Mucosa of descending colon (tissue), 3 donors: ENCODE measurements at regions of chr15 and their contacts with region 1.

Region 1: GRCh38 chr15:53490341-53490740 is 269.1 kb downstream of the WDR72 start:
- DNase-seq: no peak
- ATAC-seq: no peak
- H3K4me3 ChIP-seq: no peak overlapping the region
- H3K4me1 ChIP-seq: no peaks in the 10 kb centered on the region
- CTCF ChIP-seq: no peak

Region 2: DNA sequence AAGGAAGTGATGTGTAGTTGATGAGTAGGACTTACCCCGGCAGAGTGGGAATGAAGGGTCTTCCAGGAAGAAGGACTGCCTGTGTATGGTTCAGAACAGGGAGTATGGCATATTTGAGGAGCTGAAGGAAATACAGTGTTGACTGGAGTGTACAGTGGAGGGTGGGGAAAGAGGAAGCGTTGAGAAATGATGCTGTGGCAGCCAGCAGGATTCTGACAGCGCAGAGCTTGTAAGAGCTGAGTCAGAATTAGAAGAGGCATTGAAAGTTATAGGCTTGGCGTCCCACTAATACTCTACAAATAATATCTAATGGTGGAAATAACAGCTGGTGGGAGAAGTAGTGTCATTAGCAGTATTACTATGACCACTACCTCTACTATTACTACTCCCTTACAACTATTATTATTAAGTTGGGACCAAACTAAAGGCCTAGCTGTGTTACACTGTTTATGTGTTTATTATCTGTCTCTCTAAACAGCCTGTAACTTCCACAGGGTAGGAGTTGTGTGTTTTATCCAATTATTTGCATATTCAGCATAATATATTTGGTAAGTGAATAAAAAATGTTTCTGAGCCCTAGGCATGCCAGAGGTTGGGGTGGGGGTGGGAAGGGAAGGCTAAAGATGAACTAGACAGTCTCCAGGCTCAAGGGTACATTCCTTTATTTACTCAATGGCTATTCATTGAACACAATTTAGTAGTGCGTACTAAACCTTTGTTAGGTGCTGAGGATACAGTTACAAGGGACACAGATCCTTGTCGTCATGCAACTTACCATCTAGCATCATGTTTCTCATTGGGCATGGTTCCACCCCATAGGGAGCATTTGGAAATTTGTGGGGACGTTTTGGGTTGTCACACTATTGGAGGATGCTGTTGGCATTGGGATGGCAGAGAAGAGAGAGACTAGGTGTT is 271.4 kb before region 1 on chr15:
- intact Hi-C with region 1: no loop called
- DNase-seq: no peak
- ATAC-seq: no peak
- H3K4me3 ChIP-seq: no peak overlapping the region
- H3K4me1 ChIP-seq: no peaks in the 10 kb centered on the region
- CTCF ChIP-seq: no peak

Region 3: GRCh38 chr15:53536479-53537120 is 46.3 kb after region 1 on chr15:
- intact Hi-C with region 1: loop called in 1 of 2 experiments (anchors 5 kb)
- DNase-seq: no peak
- ATAC-seq: no peak
- H3K4me3 ChIP-seq: no peak overlapping the region
- H3K4me1 ChIP-seq: no peaks in the 10 kb centered on the region
- CTCF ChIP-seq: no peak